Activated B cell treated with CpG ODN at 0.5 μM for 24 hours (primary cell): ENCODE measurements at regions of chr10 and their contacts with region 1.

Region 1: DNA sequence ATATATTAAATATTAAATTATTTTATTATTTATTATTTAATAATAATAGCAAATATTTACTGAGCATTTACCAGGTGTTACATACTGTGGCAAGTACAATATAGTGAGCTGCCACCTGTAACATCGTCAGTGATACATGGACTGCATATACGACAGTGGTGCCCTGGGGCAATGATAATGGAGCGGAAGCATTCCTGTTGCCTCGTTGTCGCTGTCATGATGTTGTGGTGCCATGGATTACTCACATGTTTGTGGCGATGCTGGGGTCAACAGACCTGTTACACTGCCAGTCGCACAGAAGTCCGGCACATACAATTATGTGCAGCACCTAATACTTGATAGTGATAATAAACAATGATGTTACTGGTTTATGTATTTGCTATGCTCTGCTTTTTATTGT is 20.6 kb downstream of the CAMK1D start:
- DNase-seq: no peak
- ATAC-seq: no peak
- H3K4me3 Mint-ChIP-seq: no peak overlapping the region
- H3K27ac Mint-ChIP-seq: no peak overlapping the region
- H3K4me1 Mint-ChIP-seq: peaks cover 47% of the 10 kb centered on the region
- H3K27me3 Mint-ChIP-seq: no peaks in the 10 kb centered on the region
- CTCF ChIP-seq: no peak

Region 2: DNA sequence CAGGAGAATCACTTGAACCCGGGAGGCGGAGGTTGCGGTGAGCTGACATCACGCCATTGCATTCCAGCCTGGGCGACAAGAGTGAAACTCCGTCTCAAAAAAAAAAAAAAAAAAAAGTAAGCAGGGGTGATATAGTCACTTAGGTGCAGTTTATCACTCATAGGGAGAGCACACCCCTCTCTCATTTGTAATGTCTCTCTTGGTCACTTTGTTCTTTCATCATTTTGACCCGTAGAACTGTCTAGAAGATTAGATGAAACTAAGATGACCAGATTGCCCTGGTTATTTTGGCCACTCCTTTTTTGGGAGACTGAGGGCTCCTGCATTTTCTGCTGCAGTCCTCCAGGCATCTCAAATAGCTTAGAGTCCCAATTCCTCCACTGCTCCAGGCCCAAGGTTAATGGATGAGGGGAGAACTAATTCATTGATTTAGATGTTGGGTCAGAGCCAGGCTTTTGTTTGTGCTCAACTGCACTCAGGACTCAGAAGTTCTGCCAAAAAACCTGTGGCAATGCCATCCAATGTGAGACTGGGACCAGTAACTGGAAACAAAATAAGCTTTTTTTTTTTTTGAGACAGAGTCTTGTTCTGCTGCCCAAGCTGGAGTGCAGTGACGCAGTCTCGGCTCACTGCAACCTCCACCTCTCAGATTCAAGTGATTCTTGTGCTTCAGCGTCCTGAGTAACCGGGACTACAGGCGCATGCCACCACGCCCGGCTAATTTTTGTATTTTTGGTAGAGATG is 70.6 kb before region 1 on chr10:
- CTCF ChIA-PET with region 1: no interaction called
- POLR2A ChIA-PET with region 1: no interaction called
- intact Hi-C with region 1: no loop called
- DNase-seq: no peak
- ATAC-seq: no peak
- H3K4me3 Mint-ChIP-seq: no peak overlapping the region
- H3K27ac Mint-ChIP-seq: no peak overlapping the region
- H3K4me1 Mint-ChIP-seq: peaks cover 9% of the 10 kb centered on the region
- H3K27me3 Mint-ChIP-seq: no peaks in the 10 kb centered on the region
- CTCF ChIP-seq: no peak

Region 3: DNA sequence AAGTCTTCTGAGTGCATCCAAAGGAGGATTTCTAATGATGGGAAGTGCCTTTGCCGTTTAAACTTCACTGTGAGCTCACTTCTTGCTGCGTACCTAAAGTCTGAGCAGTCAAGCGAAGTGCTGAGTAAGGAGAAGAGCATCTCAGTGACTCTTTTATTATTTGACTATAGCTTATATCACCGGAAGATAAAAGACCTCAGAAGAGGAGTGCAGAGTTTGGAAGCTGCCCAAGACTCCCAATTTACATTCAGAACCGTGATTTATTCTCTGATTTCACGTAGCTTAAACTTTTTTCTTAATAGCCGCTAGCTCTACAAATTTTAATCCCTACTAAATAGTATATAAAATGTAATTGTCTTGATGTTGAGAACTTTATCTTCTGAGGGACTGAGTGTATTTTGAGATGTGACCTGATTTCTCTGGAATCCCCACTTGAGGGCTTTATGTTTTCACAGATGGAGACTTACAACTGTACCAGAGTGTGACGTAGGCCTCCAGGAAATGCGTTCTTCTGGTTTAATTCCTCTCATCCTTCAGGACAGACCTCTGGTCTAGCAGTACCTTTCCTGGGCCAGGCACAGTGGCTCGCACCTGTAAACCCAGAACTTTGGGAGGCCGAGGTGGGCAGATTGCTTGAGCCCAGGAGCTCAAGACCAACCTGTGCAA is 30.4 kb after region 1 on chr10:
- CTCF ChIA-PET with region 1: no interaction called
- POLR2A ChIA-PET with region 1: no interaction called
- intact Hi-C with region 1: loop called (anchors 5 kb)
- DNase-seq: no peak
- ATAC-seq: no peak
- H3K4me3 Mint-ChIP-seq: no peak overlapping the region
- H3K27ac Mint-ChIP-seq: no peak overlapping the region
- H3K4me1 Mint-ChIP-seq: peaks cover 32% of the 10 kb centered on the region
- H3K27me3 Mint-ChIP-seq: no peaks in the 10 kb centered on the region
- CTCF ChIP-seq: no peak